RWPE1 (cell line): ENCODE measurements at regions of chr10 and their contacts with region 1.

Region 1: DNA sequence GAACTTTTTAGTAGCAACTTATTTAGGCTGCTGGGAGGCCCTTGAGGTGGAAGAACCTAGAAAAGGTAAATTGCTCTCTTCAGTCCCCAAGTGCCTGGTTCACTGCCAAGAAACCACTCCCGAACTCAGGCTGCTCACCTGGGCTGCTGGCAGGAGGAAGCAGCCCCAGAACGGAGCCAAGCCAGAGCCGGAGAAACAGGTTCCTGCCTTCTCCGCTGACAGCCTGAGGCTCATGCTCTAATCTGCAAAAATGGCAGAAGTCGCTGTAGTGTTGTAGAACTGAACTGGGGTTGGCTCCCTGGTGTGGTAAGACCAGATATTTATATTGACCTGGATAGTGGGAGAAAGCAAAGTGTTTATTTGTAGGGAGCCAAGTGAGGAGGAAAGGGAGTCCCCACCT is 136.0 kb downstream of the CUL2 start:
- DNase-seq: peak; percentile 67
- H3K27ac ChIP-seq: 0 out of 2 replicates have a peak overlapping the region, but pooled peaks have one; percentile 34
- CTCF ChIP-seq: no peak

Region 2: GRCh38 chr10:34907743-34908430 is 46.3 kb before region 1 on chr10:
- CTCF ChIA-PET with region 1: no interaction called
- POLR2A ChIA-PET with region 1: interaction called, 12 read pairs
- DNase-seq: no peak
- H3K27ac ChIP-seq: peak overlapping the region; percentile 72
- CTCF ChIP-seq: no peak

Region 3: GRCh38 chr10:35112571-35112970 is 158.4 kb after region 1 on chr10:
- CTCF ChIA-PET with region 1: no interaction called
- POLR2A ChIA-PET with region 1: no interaction called
- DNase-seq: no peak
- H3K27ac ChIP-seq: no peak overlapping the region
- CTCF ChIP-seq: no peak

Region 4: DNA sequence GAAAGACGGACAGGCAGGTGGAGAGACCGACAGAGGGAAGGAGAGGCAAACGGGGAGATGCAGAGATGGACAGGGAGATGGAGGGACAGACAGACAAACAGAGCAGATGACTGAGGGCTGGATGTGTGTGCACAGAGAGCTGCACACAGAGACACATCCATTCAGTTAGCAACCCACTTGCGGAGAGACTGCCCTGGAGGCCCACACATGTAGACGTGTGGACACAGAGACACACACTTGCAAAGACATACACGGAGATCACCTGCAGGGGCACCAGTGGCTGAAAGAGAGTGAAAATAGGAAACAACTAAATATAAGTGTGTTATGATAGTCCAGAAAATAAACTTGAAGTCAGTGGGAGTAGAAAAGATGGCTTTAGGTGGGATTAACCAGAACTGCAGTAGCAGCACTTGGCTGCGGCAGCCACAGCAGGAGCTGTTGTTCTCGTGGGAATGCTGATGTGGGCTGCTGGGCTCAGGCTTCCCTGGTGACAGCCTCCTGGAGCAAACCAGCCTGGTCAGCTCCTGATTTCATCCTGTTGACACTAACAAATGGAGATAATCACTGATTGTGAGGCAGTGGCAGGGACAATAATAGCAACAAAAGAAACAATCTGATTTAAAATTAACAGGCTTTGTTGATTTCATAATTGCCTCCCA is 516.2 kb after region 1 on chr10:
- CTCF ChIA-PET with region 1: no interaction called
- POLR2A ChIA-PET with region 1: no interaction called
- DNase-seq: no peak
- H3K27ac ChIP-seq: no peak overlapping the region
- CTCF ChIP-seq: no peak